Heart left ventricle (tissue), 16 donors: ENCODE measurements at regions of chr16 and their contacts with region 1.

Region 1: DNA sequence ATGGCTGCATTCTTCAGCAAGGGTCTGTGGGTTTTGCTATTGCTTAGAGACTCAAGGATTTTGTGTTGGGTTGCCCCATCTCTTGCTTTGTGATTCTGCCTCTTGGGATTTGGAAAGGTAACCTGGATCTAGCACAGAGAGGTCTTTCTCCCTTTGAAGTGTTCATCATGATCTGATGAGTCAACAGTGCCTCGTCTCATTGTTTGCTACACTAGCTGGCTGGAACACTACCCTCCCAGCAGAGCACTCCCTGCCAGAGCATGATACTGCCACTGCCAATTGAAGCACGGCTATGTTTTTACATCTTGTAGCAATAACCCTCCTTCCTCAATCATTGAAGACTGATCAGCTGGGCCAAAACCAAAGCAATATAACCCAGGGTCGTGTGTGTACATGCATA is 361.0 kb downstream of the CDH13 start:
- DNase-seq: no peak
- ATAC-seq: no peak
- H3K4me3 ChIP-seq: no peak overlapping the region
- H3K27ac ChIP-seq: no peak overlapping the region
- H3K4me1 ChIP-seq: peaks cover 0 to 4% (median 0%) of the 10 kb centered on the region in 12 donors
- H3K27me3 ChIP-seq: no peaks in the 10 kb centered on the region
- CTCF ChIP-seq: no peak
- POLR2A ChIP-seq: no peak

Region 2: DNA sequence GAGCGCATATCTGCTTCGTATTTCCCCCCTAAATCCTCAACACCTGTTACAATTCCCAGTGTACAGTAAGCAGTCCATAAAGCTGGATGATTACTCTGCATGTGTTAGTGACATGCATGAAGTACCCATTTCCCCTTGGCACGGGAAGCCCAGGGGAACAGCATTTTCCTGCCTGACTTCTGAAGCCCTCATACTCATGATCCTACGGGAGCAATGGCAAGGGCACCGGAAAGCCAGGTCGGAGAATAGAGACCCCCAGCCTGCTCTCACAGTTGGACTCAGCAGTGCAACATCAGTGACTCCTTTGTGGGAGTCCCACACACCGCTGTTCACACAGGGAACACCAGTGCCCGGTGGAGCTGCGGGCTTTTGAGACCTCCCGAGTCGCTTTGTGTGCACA is 24.1 kb before region 1 on chr16:
- intact Hi-C with region 1: loop called in 1 of 10 experiments (anchors 1 kb)
- DNase-seq: no peak
- ATAC-seq: no peak
- H3K4me3 ChIP-seq: no peak overlapping the region
- H3K27ac ChIP-seq: no peak overlapping the region
- H3K4me1 ChIP-seq: no peaks in the 10 kb centered on the region
- H3K27me3 ChIP-seq: no peaks in the 10 kb centered on the region
- CTCF ChIP-seq: no peak
- POLR2A ChIP-seq: no peak